Calu3 (cell line): ENCODE measurements at regions of chrX and their contacts with region 1.

Region 1: GRCh38 chrX:80430826-80431504 is 10.7 kb downstream of the TENT5D start:
- DNase-seq: no peak
- H3K4me3 Mint-ChIP-seq: no peak overlapping the region
- H3K27ac Mint-ChIP-seq: no peak overlapping the region
- H3K4me1 Mint-ChIP-seq: no peaks in the 10 kb centered on the region
- H3K27me3 Mint-ChIP-seq: no peaks in the 10 kb centered on the region
- CTCF ChIP-seq: no peak

Region 2: DNA sequence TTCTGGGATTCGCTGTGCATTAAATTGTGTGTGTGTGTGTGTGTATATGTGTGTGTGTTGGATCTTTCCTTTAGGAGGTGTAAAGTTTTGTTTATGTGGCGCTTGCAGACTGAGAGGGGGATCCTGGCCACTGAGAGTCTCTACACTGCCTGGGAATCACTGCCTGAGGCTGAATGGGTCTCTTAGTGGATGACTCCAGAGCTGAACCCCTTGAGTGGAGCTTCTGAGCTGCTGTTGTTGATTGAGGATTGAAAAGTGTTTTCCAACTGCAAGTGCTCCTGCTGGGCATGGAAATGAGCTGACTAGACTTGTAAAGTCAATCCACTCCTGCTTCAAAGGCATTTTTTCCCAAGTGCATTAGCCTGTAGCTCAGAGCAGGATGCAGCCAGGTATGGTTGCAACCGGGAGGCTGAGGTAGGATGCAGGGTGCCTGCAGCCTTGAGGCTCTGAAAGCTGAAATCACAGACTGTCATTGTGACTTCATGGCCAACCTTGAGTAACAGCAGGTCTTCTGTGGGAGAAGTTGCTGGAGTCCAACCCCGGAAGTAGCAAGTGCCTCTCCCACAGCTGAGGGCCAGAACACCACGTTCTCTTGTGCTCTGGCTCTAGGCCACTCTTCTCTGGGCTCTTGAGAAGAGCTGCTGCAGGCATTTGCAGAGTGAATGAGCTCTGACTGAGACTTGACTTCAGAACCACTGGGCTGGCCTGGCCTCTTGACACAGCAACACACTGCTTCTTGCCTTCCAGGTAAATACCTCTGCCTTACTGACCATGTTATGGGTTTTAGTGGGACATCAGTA is 416.6 kb before region 1 on chrX and contains the start of gene TBX22:
- CTCF ChIA-PET with region 1: no interaction called
- intact Hi-C with region 1: no loop called
- DNase-seq: no peak
- H3K4me3 Mint-ChIP-seq: no peak within 1 kb of the TSS
- H3K27ac Mint-ChIP-seq: no peak within 1 kb of the TSS
- H3K4me1 Mint-ChIP-seq: no peaks in the 10 kb centered on the region
- H3K27me3 Mint-ChIP-seq: no peaks in the 10 kb centered on the region
- CTCF ChIP-seq: no peak
- total RNA-seq, gene TBX22: not detected in 2 replicates

Region 3: GRCh38 chrX:80471582-80471981 is 40.6 kb after region 1 on chrX:
- CTCF ChIA-PET with region 1: no interaction called
- intact Hi-C with region 1: no loop called
- DNase-seq: no peak
- H3K4me3 Mint-ChIP-seq: no peak overlapping the region
- H3K27ac Mint-ChIP-seq: no peak overlapping the region
- H3K4me1 Mint-ChIP-seq: no peaks in the 10 kb centered on the region
- H3K27me3 Mint-ChIP-seq: no peaks in the 10 kb centered on the region
- CTCF ChIP-seq: no peak

Region 4: GRCh38 chrX:80578517-80579105 is 147.6 kb after region 1 on chrX:
- CTCF ChIA-PET with region 1: interaction called, 5 read pairs
- intact Hi-C with region 1: loop called (anchors 2 kb)
- DNase-seq: no peak
- H3K4me3 Mint-ChIP-seq: no peak overlapping the region
- H3K27ac Mint-ChIP-seq: no peak overlapping the region
- H3K4me1 Mint-ChIP-seq: no peaks in the 10 kb centered on the region
- H3K27me3 Mint-ChIP-seq: no peaks in the 10 kb centered on the region
- CTCF ChIP-seq: peak; percentile 27